Activated T-helper 2 cell treated with anti-CD3 and anti-CD28 coated beads, Interferon-gamma antibody, Interleukin-2, Interleukin-4, amounts not matched to agents 10 μg/mL and 5 μg/mL and 100 μg/mL, durations not matched to agents 14 hours and 24 hours and 36 hours (primary cell): ENCODE measurements at regions of chr6 and their contacts with region 1.

Region 1: GRCh38 chr6:154156135-154156896 is 117.3 kb downstream of the OPRM1 start:
- DNase-seq: peak; percentile 18
- H3K4me3 Mint-ChIP-seq: peak overlapping the region; percentile 6
- H3K27ac Mint-ChIP-seq: no peak overlapping the region
- H3K4me1 Mint-ChIP-seq: peaks cover 24% of the 10 kb centered on the region
- H3K27me3 Mint-ChIP-seq: peaks cover 4% of the 10 kb centered on the region

Region 2: DNA sequence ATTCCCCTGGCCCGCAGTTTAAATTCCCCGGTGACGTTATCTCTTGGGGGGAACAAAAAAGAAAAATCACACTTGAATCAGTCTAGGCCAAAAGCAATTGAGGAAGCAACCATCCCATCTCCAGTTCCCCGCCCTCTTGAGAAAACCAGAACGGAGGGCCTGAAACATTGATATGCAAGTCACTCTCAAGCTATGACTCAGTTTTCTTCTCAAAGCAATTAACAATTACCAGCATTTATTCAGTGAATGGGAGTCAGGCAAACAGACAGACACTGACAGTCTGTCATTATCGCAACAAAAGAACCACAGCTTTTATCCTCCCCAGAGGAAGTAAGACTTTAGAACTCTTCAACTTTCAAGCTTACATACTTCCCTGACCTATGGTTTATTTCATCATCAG is 16.4 kb before region 1 on chr6:
- intact Hi-C with region 1: no loop called
- DNase-seq: no peak
- H3K4me3 Mint-ChIP-seq: no peak overlapping the region
- H3K27ac Mint-ChIP-seq: no peak overlapping the region
- H3K4me1 Mint-ChIP-seq: no peaks in the 10 kb centered on the region
- H3K27me3 Mint-ChIP-seq: peaks cover 4% of the 10 kb centered on the region

Region 3: GRCh38 chr6:154169193-154169847 is 13.0 kb after region 1 on chr6:
- intact Hi-C with region 1: no loop called
- DNase-seq: no peak
- H3K4me3 Mint-ChIP-seq: no peak overlapping the region
- H3K27ac Mint-ChIP-seq: peak overlapping the region; percentile 43
- H3K4me1 Mint-ChIP-seq: peaks cover 9% of the 10 kb centered on the region
- H3K27me3 Mint-ChIP-seq: peaks cover 5% of the 10 kb centered on the region

Region 4: GRCh38 chr6:154229786-154230185 is 73.5 kb after region 1 on chr6:
- intact Hi-C with region 1: loop called (anchors 2 kb)
- DNase-seq: peak; percentile 45
- H3K4me3 Mint-ChIP-seq: peak overlapping the region; percentile 51
- H3K27ac Mint-ChIP-seq: peak overlapping the region; percentile 66
- H3K4me1 Mint-ChIP-seq: peaks cover 44% of the 10 kb centered on the region
- H3K27me3 Mint-ChIP-seq: no peaks in the 10 kb centered on the region

Region 5: GRCh38 chr6:154276810-154277628 is 120.7 kb after region 1 on chr6:
- intact Hi-C with region 1: loop called (anchors 1 kb)
- DNase-seq: no peak
- H3K4me3 Mint-ChIP-seq: peak overlapping the region; percentile 6
- H3K27ac Mint-ChIP-seq: no peak overlapping the region
- H3K4me1 Mint-ChIP-seq: peaks cover 16% of the 10 kb centered on the region
- H3K27me3 Mint-ChIP-seq: peaks cover 13% of the 10 kb centered on the region

Region 6: DNA sequence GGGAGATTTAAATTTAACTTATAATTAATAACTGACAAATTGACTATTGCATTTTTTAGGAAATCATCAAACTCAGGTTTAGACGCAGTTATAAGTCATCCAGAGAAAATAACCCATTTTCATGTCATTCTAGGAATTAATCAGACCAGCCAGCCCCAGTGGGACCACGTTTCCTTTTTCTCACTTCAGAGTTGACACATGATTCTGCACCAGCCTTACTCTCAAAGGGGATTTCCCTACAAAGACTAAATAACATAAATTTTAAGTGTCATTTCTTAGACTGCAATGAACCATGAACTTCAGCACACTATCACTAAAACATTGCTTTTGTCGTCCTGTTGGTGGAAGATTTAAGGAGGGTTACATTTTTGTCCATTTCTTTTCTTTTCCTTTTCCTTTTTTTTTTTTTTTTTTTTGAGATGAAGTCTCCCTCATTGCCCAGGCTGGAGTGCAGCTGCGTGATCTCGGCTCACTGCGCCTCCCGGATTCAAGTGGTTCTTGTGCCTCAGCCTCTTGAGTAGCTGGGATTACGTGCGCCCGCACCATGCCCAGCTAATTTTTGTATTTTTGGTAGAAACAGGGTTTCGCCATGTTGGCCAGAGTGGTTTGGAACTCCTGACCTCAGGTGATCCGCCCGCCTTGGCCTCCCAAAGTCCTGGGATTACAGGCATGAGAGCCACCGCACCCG is 196.7 kb after region 1 on chr6:
- intact Hi-C with region 1: loop called (anchors 5 kb)
- DNase-seq: no peak
- H3K4me3 Mint-ChIP-seq: no peak overlapping the region
- H3K27ac Mint-ChIP-seq: no peak overlapping the region
- H3K4me1 Mint-ChIP-seq: peaks cover 24% of the 10 kb centered on the region
- H3K27me3 Mint-ChIP-seq: peaks cover 50% of the 10 kb centered on the region

Region 7: GRCh38 chr6:154370545-154370944 is 214.2 kb after region 1 on chr6:
- intact Hi-C with region 1: loop called (anchors 1 kb)
- DNase-seq: no peak
- H3K4me3 Mint-ChIP-seq: no peak overlapping the region
- H3K27ac Mint-ChIP-seq: no peak overlapping the region
- H3K4me1 Mint-ChIP-seq: peaks cover 2% of the 10 kb centered on the region
- H3K27me3 Mint-ChIP-seq: peaks cover 16% of the 10 kb centered on the region

Region 8: DNA sequence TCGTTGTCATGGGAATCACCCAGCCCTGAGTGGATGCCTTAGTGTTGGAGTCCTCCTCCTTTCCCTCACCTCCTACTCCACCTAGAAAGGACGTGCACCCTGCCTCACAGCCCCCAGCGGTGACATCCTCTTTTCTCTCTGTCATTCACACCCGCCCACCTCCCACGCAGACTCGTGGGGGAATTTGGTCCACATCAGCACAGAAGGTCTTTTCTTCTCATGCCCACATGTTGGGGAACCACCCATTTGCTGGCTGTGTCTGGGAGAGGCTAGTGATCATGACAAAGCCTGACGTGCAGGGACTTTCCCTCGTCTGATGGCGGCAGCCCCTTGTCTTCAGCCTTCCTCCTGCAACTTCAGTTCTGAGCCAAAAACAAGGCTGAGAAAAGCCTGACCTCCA is 450.1 kb after region 1 on chr6:
- intact Hi-C with region 1: loop called (anchors 5 kb)
- DNase-seq: peak; percentile 26
- H3K4me3 Mint-ChIP-seq: peak overlapping the region; percentile 5
- H3K27ac Mint-ChIP-seq: peak overlapping the region; percentile 71
- H3K4me1 Mint-ChIP-seq: peaks cover 38% of the 10 kb centered on the region
- H3K27me3 Mint-ChIP-seq: peaks cover 10% of the 10 kb centered on the region

Region 9: DNA sequence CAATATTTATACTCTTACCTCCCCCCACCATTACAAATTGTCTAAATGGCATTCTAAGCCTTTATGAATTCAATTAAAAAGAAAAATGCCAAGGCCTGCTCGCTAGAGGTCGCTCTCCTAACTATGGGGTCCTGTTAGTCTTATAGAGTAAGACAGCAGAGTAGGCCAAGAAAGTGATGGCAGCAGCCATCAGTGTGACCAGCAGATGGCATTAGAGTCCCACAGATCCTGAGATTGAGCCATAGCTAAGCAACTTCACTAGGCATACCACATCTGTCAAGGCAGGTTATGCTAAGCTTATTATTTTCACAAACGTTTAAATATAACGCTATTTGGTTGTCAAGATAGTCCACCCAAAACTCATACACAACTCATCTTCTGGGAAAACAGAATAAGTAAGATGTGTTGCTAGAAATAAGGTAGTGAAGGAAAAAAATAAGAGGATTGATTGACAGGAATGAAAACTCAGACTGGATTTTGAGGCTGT is 519.3 kb after region 1 on chr6:
- intact Hi-C with region 1: loop called (anchors 5 kb)
- DNase-seq: peak; percentile 80
- H3K4me3 Mint-ChIP-seq: no peak overlapping the region
- H3K27ac Mint-ChIP-seq: no peak overlapping the region
- H3K4me1 Mint-ChIP-seq: peaks cover 2% of the 10 kb centered on the region
- H3K27me3 Mint-ChIP-seq: peaks cover 2% of the 10 kb centered on the region